Naive thymus-derived CD4-positive, alpha-beta T cell (primary cell): ENCODE measurements at regions of chr20 and their contacts with region 1.

Region 1: GRCh38 chr20:3121271-3121911 is 36.9 kb upstream of the AVP start:
- DNase-seq: peak in 7 of 9 donors; percentile 49 to 75 (median 72)
- ATAC-seq: peak; percentile 85
- H3K4me3 ChIP-seq: peak overlapping the region; percentile 46
- H3K4me3 Mint-ChIP-seq: peak overlapping the region; percentile 68 to 91 (median 83)
- H3K27ac ChIP-seq: peak overlapping the region; percentile 82
- H3K27ac Mint-ChIP-seq: peak overlapping the region; percentile 97 to 100 (median 99)
- H3K4me1 ChIP-seq: peaks cover 5 to 37% of the 10 kb centered on the region in 2 donors
- H3K4me1 Mint-ChIP-seq: peaks cover 22 to 66% (median 51%) of the 10 kb centered on the region in 7 donors
- H3K27me3 ChIP-seq: no peaks in the 10 kb centered on the region
- H3K27me3 Mint-ChIP-seq: no peaks in the 10 kb centered on the region

Region 2: GRCh38 chr20:2485661-2486060 is 635.7 kb before region 1 on chr20:
- CTCF ChIA-PET with region 1: no interaction called
- POLR2A ChIA-PET with region 1: no interaction called
- intact Hi-C with region 1: no loop called
- DNase-seq: no peak
- ATAC-seq: no peak
- H3K4me3 ChIP-seq: no peak overlapping the region
- H3K4me3 Mint-ChIP-seq: no peak overlapping the region
- H3K27ac ChIP-seq: no peak overlapping the region
- H3K27ac Mint-ChIP-seq: no peak overlapping the region
- H3K4me1 ChIP-seq: no peaks in the 10 kb centered on the region
- H3K4me1 Mint-ChIP-seq: peaks cover 0 to 6% (median 0%) of the 10 kb centered on the region in 7 donors
- H3K27me3 ChIP-seq: no peaks in the 10 kb centered on the region
- H3K27me3 Mint-ChIP-seq: no peaks in the 10 kb centered on the region

Region 3: GRCh38 chr20:3141757-3142156 is 20.4 kb after region 1 on chr20:
- CTCF ChIA-PET with region 1: no interaction called
- POLR2A ChIA-PET with region 1: interaction called, 3 read pairs
- intact Hi-C with region 1: loop called in 1 of 2 experiments (anchors 2 kb)
- DNase-seq: no peak
- ATAC-seq: no peak
- H3K4me3 ChIP-seq: no peak overlapping the region
- H3K4me3 Mint-ChIP-seq: no peak overlapping the region
- H3K27ac ChIP-seq: no peak overlapping the region
- H3K27ac Mint-ChIP-seq: no peak overlapping the region
- H3K4me1 ChIP-seq: no peaks in the 10 kb centered on the region
- H3K4me1 Mint-ChIP-seq: peaks cover 5 to 36% (median 28%) of the 10 kb centered on the region in 7 donors
- H3K27me3 ChIP-seq: no peaks in the 10 kb centered on the region
- H3K27me3 Mint-ChIP-seq: no peaks in the 10 kb centered on the region